GM18951 (cell line): ENCODE measurements at regions of chr10 and their contacts with region 1.

Region 1: GRCh38 chr10:102831322-102832071 is 5.7 kb downstream of the CYP17A1 start:
- POLR2A ChIP-seq: no peak

Region 2: DNA sequence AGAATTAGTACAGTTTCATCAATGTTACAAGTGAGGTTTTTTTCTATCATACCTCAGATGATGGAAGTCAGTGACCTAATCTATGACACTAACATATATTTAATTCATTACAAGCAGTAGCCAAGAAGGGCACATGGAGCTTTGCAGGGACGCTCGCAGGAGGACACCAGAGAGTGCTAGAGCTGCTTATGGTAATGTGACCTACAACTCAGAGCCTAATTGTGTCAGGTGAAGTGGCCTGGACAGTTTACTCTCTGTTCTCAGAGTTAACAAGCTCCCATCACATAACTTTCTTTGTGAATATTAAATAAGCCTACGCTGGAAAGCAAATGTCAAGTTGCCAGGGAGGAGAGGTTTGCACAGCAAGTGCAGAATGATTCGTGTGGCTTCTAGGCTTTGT is 75.0 kb after region 1 on chr10:
- in situ Hi-C with region 1: loop called (anchors 5 kb)
- POLR2A ChIP-seq: no peak

Region 3: DNA sequence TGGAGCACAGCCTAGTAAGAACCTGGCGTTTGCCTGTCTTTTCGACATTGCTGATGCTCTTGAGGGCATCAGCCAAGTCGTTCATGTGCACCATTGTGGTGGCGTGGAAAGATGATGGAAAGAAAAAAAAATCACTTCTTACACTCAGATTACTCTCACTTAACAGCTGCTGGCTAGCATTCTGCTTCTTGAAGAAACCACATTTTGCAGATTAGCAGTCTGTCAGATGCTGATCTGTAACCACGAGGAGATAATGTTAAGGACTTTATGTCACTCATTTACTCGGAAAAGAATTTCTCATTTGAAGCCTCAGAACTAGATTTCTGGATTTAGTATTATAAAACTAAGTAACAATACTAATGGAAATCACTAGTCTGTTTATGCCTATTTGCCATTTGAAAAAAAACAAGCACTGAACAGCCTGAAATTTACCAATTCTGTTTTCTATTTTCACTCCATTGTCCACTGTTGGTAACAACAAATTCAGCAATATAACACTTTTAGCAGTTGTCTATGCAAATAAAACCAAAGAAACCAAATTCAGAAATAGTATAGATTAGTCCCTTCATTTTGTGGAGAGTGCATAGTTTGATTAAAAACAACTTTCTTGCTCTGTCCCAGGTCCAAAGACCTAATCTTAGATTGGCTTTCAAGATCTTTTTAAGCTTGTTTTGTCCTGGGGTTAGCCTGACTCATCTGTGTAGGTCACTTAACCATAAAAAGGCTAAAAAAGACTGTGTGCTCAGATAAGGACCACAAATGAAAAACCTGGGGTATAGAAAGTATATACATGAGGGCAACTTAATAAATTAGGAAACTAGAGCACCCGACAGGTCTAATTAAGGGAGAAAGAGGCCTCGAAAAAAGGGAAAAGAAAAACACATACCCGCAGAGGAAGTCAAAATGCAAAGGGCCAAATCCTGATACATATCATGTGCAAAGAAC is 294.1 kb after region 1 on chr10:
- in situ Hi-C with region 1: no loop called
- POLR2A ChIP-seq: no peak